ENCODE measurements at regions of chr5 and their contacts with region 1.

Region 1: DNA sequence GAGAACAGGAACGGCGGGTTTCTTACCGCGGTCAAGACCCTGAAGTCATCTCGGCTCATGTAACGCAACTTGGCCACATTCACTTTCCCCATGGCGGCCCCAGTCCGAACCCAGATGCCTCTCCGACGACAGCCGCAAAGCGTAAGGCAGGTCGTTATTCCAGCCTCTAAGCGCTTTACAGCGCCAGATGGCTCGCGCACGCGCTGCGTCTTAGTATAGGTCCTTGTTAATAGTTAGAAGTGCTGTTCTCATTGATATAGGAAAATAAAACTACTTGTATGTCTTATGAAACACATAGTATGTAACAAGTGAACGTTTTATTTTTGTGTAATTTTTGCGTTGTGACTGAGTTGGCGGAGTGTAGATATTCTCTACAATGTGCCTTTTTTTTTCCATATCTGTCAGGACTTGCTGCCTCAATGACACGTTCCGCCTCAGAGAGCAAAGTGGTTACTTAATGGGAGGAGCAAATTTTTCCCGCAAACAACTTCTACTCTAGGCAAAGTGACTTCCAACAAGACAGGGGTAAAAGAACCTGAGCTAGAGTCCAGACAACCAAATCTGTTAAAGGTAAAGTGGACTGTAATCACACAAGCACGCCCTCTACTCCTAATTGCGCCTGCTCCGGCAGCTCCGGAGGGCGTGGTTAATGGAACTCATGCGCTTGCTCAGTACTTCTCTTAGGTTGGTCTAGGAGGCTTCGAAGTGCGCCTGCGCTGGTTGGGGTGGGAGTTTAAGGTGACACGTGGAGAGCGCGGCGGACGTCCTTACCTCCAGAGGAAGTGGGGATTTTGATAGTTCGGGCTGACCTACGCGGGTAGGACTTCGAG is at the start of gene RIOK2:
- DNase-seq: peak; percentile 95
- H3K4me3 Mint-ChIP-seq: peak within 1 kb of the TSS; percentile 75
- H3K27ac Mint-ChIP-seq: peak within 1 kb of the TSS; percentile 97
- H3K4me1 Mint-ChIP-seq: peaks cover 34% of the 10 kb centered on the region
- H3K27me3 Mint-ChIP-seq: no peaks in the 10 kb centered on the region
- CTCF ChIP-seq: no peak
- total RNA-seq, gene RIOK2: 28.6 and 33.0 TPM in 2 replicates

Region 2: DNA sequence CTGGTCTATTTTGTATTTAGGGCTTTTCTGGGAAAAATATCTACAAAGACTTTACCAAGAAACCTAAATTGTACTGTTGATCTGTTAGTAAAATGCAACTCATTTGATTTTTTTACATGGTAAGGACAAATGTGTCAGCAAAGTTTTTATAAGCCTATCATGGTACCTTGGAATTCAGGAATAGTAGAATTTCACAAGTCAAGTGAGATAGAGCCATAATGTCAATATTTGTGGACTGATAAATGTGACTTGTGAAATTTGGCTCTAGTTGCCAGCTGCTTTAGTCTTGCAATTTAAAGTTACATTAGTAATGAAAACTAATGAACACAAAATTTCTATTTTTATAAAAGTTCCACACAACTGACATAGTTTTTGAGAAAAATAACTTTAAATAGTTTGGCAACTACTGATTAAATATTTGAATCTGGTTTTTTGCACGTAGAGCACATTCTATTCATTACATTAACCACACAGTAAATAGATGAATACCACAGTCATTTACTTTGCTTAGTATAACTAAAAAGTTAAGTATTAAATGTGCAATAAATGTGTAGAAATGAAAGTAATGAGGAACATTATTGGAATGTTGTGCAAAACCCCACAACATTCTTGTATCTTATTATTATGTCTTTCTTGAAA is 40.9 kb after region 1 on chr5:
- CTCF ChIA-PET with region 1: no interaction called
- intact Hi-C with region 1: loop called (anchors 5 kb)
- DNase-seq: no peak
- H3K4me3 Mint-ChIP-seq: no peak overlapping the region
- H3K27ac Mint-ChIP-seq: no peak overlapping the region
- H3K4me1 Mint-ChIP-seq: peaks cover 12% of the 10 kb centered on the region
- H3K27me3 Mint-ChIP-seq: no peaks in the 10 kb centered on the region
- CTCF ChIP-seq: no peak

Region 3: DNA sequence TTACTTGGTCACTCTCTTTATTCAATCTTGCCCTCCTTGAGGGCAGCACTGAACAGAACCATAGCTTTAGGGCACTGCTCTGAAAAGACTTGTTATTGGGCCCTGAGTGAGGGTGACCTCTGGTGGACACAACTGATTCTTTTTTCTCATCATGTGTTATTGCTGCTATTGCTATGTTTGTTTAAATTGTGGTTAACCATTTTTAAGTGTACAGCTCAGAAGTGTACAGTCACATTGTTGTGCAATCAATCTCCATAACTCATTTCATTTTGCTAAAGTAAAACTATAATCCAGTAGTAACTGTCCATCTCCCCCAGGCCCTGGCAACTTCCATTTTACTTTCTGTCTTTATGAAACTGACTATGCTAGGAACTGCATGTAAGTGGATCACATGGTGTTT is 350.9 kb after region 1 on chr5:
- CTCF ChIA-PET with region 1: no interaction called
- intact Hi-C with region 1: loop called (anchors 5 kb)
- DNase-seq: peak; percentile 60
- H3K4me3 Mint-ChIP-seq: no peak overlapping the region
- H3K27ac Mint-ChIP-seq: no peak overlapping the region
- H3K4me1 Mint-ChIP-seq: peaks cover 23% of the 10 kb centered on the region
- H3K27me3 Mint-ChIP-seq: no peaks in the 10 kb centered on the region
- CTCF ChIP-seq: peak; percentile 56